Mammary epithelial cell (primary cell): ENCODE measurements at regions of chr16 and their contacts with region 1.

Region 1: DNA sequence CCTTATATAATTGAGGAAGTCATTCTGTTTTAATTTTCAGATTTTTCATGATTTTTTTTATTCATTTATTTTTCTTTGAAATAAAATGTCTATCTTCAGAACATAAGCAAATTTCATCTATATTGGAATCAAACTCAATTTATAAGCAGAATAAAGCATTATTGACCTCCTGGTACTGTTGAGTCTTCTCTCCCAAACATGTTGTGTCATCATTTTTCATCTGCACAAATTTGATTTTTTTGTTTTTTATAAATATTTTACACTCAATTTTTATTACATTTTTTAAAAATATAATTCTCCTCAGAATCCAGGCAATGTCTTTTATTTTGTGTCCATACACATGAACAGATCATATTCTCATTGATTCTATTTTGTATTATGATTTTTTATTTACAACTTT is 2363.9 kb downstream of the TP53TG3F start:
- DNase-seq: no peak
- H3K4me3 ChIP-seq: no peak overlapping the region
- H3K27ac ChIP-seq: no peak overlapping the region
- H3K4me1 ChIP-seq: no peaks in the 10 kb centered on the region
- H3K27me3 ChIP-seq: no peaks in the 10 kb centered on the region
- CTCF ChIP-seq: no peak

Region 2: DNA sequence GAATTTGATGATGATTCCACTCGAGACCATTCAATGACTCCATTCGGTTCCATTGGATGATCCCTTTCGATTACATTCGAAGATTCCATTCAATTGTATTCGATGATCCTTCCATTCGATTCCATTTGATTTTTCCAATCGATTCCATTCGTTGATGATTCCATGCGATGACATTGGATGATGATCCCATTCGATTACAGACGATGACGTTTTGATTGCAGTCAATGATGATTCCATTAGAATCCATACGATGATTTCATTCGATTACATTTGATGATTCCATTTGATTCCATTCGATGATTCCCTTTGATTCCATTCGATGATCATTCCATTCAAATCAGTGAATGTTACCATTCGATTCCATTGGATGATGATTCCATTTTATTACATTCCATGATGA is 1099.7 kb before region 1 on chr16:
- CTCF ChIA-PET with region 1: no interaction called
- dilution Hi-C with region 1: no loop called
- in situ Hi-C with region 1: no loop called
- intact Hi-C with region 1: no loop called
- DNase-seq: no peak
- H3K4me3 ChIP-seq: no peak overlapping the region
- H3K27ac ChIP-seq: no peak overlapping the region
- H3K4me1 ChIP-seq: no peaks in the 10 kb centered on the region
- H3K27me3 ChIP-seq: no peaks in the 10 kb centered on the region
- CTCF ChIP-seq: no peak

Region 3: GRCh38 chr16:35664091-35664693 is 159.2 kb before region 1 on chr16:
- CTCF ChIA-PET with region 1: no interaction called
- dilution Hi-C with region 1: no loop called
- in situ Hi-C with region 1: loop called in 1 of 2 experiments (anchors 25 kb)
- intact Hi-C with region 1: no loop called
- DNase-seq: no peak
- H3K4me3 ChIP-seq: no peak overlapping the region
- H3K27ac ChIP-seq: no peak overlapping the region
- H3K4me1 ChIP-seq: no peaks in the 10 kb centered on the region
- H3K27me3 ChIP-seq: no peaks in the 10 kb centered on the region
- CTCF ChIP-seq: no peak

Region 4: DNA sequence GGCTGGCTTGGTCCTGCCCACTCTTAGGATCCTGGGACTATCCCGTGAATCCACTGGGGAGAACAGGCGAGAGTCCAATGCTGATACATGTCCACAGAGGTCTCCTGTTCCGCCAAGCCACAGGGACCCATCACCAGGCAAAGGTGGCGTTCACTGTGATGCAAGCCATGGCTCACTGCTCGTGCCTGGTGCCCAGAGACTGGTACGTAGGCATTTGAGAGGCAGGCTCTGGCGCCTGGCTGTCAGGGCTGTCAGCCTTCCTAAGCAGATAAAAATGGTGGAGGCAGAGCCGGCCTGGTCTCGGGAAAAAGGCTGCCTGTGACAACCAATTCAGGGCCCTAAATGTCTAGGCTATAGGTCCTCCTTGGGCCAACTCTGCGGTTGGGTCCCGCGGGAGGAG is 35.0 kb before region 1 on chr16:
- CTCF ChIA-PET with region 1: no interaction called
- dilution Hi-C with region 1: no loop called
- in situ Hi-C with region 1: no loop called
- intact Hi-C with region 1: no loop called
- DNase-seq: no peak
- H3K4me3 ChIP-seq: no peak overlapping the region
- H3K27ac ChIP-seq: no peak overlapping the region
- H3K4me1 ChIP-seq: no peaks in the 10 kb centered on the region
- H3K27me3 ChIP-seq: no peaks in the 10 kb centered on the region
- CTCF ChIP-seq: no peak